ENCODE measurements at regions of chr5 and their contacts with region 1.

Region 1: GRCh38 chr5:169116961-169117461 is 183.9 kb downstream of the SLIT3 start:
- DNase-seq: peak; percentile 42 to 72
- H3K4me3 ChIP-seq: no peak overlapping the region
- H3K27ac ChIP-seq: peak overlapping the region; percentile 84 to 88
- H3K4me1 ChIP-seq: peaks cover 5% of the 10 kb centered on the region in 2 donors
- H3K27me3 ChIP-seq: no peaks in the 10 kb centered on the region
- CTCF ChIP-seq: peak in 2 of 3 experiments; percentile 22 to 30

Region 2: GRCh38 chr5:168978015-168978414 is 139.0 kb before region 1 on chr5:
- intact Hi-C with region 1: no loop called
- DNase-seq: peak in 1 of 2 donors; percentile 31
- H3K4me3 ChIP-seq: no peak overlapping the region
- H3K27ac ChIP-seq: no peak overlapping the region
- H3K4me1 ChIP-seq: no peaks in the 10 kb centered on the region
- H3K27me3 ChIP-seq: no peaks in the 10 kb centered on the region
- CTCF ChIP-seq: no peak

Region 3: DNA sequence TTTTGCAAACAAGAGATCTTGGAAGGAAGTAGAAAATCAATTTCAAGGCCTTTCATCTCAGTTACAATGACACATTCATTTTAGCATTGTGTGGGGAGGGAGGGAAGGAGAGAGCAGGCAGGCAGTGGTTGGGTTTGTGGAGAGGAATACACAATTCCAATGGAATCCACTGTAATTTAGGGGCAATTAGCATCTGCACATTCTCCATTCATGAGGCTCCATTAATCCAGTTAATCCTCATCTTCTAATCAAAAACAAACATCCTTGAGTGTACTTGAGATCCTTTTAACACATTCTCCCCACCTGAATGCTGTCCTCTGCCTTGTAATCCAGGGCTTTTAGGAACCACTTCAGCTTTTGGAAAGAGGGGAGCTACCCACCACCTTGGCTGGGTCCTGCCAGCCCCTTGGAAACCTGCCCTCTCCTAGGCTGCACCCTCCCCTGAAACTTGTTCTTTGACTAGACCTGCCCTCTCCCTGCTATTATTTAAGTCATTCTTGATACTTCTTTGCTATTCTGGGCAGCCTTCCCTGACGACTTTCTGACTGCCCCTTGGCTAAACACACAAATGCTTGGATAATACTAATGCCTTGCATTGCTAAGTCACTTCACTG is 87.2 kb before region 1 on chr5:
- intact Hi-C with region 1: no loop called
- DNase-seq: peak in 1 of 2 donors; percentile 68
- H3K4me3 ChIP-seq: no peak overlapping the region
- H3K27ac ChIP-seq: peak overlapping the region; percentile 65 to 81
- H3K4me1 ChIP-seq: peaks cover 4 to 36% of the 10 kb centered on the region in 2 donors
- H3K27me3 ChIP-seq: no peaks in the 10 kb centered on the region
- CTCF ChIP-seq: no peak

Region 4: DNA sequence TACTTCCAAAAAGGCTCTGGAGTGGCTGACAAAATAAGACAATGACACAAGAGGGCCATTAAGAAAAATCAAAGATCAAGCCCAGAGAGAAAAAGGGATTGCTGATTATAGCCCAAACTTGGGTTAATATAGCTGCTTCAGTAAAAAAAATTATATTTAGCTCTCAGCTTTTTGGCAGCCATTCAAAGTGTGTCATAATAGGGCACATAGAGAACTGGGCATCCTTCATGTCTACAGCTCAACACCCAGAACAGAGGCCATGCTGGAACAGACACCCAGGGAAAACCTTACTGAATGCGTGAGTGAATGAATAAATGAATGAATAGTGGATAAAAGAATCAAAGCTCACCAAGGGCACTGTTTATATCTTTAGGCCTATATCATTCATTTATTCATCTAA is 73.8 kb after region 1 on chr5:
- intact Hi-C with region 1: loop called (anchors 5 kb)
- DNase-seq: no peak
- H3K4me3 ChIP-seq: no peak overlapping the region
- H3K27ac ChIP-seq: no peak overlapping the region
- H3K4me1 ChIP-seq: peaks cover 0 to 8% of the 10 kb centered on the region in 2 donors
- H3K27me3 ChIP-seq: no peaks in the 10 kb centered on the region
- CTCF ChIP-seq: no peak

Measured in ascending aorta (tissue), 2 donors.